ENCODE measurements at regions of chr1 and their contacts with region 1.

Region 1: GRCh38 chr1:19179597-19180264 is 30.3 kb downstream of the UBR4 start:
- DNase-seq: peak in 1 of 3 donors; percentile 5
- H3K4me3 ChIP-seq: no peak overlapping the region
- H3K4me3 Mint-ChIP-seq: no peak overlapping the region
- H3K27ac ChIP-seq: no peak overlapping the region
- H3K27ac Mint-ChIP-seq: peak overlapping the region in 2 of 7 donors; percentile 34 to 62
- H3K4me1 ChIP-seq: no peaks in the 10 kb centered on the region
- H3K4me1 Mint-ChIP-seq: no peaks in the 10 kb centered on the region
- H3K27me3 ChIP-seq: no peaks in the 10 kb centered on the region
- H3K27me3 Mint-ChIP-seq: peaks cover 0 to 2% (median 0%) of the 10 kb centered on the region in 3 donors
- CTCF ChIP-seq: peak; percentile 26

Region 2: GRCh38 chr1:19123837-19124236 is 55.9 kb before region 1 on chr1:
- intact Hi-C with region 1: loop called in 1 of 2 experiments (anchors 10 kb)
- DNase-seq: no peak
- H3K4me3 ChIP-seq: no peak overlapping the region
- H3K4me3 Mint-ChIP-seq: no peak overlapping the region
- H3K27ac ChIP-seq: peak overlapping the region in 1 of 2 donors; percentile 43
- H3K27ac Mint-ChIP-seq: peak overlapping the region in 1 of 7 donors; percentile 55
- H3K4me1 ChIP-seq: peaks cover 4 to 15% of the 10 kb centered on the region in 2 donors
- H3K4me1 Mint-ChIP-seq: peaks cover 11% of the 10 kb centered on the region
- H3K27me3 ChIP-seq: no peaks in the 10 kb centered on the region
- H3K27me3 Mint-ChIP-seq: no peaks in the 10 kb centered on the region
- CTCF ChIP-seq: no peak

Region 3: GRCh38 chr1:19240673-19241538 is 61.2 kb after region 1 on chr1:
- intact Hi-C with region 1: loop called in 1 of 2 experiments (anchors 5 kb)
- DNase-seq: peak; percentile 56 to 72 (median 68)
- H3K4me3 ChIP-seq: no peak overlapping the region
- H3K4me3 Mint-ChIP-seq: no peak overlapping the region
- H3K27ac ChIP-seq: peak overlapping the region in 1 of 2 donors; percentile 24
- H3K27ac Mint-ChIP-seq: peak overlapping the region; percentile 1 to 79 (median 58)
- H3K4me1 ChIP-seq: no peaks in the 10 kb centered on the region
- H3K4me1 Mint-ChIP-seq: no peaks in the 10 kb centered on the region
- H3K27me3 ChIP-seq: no peaks in the 10 kb centered on the region
- H3K27me3 Mint-ChIP-seq: no peaks in the 10 kb centered on the region
- CTCF ChIP-seq: peak; percentile 96